Transverse colon (tissue), 4 donors: ENCODE measurements at regions of chr4 and their contacts with region 1.

Region 1: DNA sequence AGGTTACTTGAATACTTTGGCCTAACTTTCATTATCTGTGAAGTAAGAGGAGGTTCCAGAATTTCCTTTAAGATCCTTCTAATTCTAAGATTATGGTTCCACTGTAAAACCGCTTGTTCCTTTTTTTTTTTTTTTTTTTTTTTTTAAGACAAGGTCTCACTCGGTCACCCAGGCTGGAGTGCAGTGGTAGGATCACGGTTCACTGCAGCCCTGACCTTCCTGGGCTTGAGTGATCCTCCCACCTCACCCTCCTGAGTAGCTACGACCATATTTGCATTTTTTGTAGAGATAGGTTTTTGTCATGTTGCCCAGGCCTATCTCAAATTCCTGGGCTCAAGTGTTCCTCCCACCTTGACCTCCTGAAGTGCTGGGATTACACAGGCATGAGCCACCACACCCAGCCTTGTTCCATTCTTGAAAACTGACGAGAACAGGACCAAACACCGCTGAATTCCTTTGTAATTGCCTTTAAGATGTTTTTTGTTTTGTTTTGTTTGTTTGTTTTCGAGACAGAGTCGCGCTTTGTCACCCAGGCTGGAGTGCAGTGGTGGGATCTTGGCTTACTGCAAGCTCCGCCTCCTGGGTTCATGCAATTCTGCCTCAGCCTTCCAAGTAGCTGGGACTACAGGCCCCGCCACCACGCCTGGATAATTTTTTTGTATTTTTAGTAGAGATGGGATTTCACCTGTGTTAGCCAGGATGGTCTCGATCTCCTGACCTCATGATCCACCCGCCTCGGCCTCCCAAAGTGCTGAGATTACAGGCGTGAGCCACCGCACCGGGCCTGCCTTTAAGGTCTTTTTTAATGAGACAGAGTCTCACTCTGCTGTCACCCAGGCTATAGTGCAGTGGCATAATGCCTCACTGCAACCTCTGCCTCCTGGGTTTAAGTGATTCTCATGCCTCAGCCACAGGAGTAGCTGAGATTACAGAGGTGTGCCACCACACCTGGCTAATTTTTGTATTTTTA is 6.8 kb downstream of the PDS5A start:
- DNase-seq: no peak
- H3K4me3 ChIP-seq: no peak overlapping the region
- H3K27ac ChIP-seq: no peak overlapping the region
- H3K4me1 ChIP-seq: peaks cover 18 to 58% (median 19%) of the 10 kb centered on the region in 4 donors
- H3K27me3 ChIP-seq: no peaks in the 10 kb centered on the region
- CTCF ChIP-seq: no peak
- EP300 ChIP-seq: no peak
- POLR2A ChIP-seq: no peak

Region 2: GRCh38 chr4:39495454-39496213 is 475.3 kb before region 1 on chr4:
- in situ Hi-C with region 1: loop called in 1 of 4 experiments (anchors 25 kb)
- intact Hi-C with region 1: no loop called
- DNase-seq: no peak
- H3K4me3 ChIP-seq: no peak overlapping the region
- H3K27ac ChIP-seq: no peak overlapping the region
- H3K4me1 ChIP-seq: no peaks in the 10 kb centered on the region
- H3K27me3 ChIP-seq: no peaks in the 10 kb centered on the region
- CTCF ChIP-seq: no peak
- EP300 ChIP-seq: no peak
- POLR2A ChIP-seq: no peak

Region 3: DNA sequence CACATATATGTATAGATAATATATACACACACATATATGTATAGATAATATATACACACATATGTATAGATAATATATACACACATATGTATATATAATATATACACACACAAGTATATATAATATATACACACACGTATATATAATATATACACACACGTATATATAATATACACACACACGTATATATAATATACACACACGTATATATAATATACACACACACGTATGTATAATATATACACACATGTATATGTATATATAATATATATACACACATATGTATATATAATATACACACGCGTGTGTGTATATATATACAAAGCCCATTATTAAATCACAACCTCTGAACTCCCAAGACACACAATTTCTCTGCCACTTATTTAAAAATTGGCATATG is 281.0 kb before region 1 on chr4:
- in situ Hi-C with region 1: loop called in 3 of 4 experiments (anchors 5 to 25 kb)
- intact Hi-C with region 1: no loop called
- DNase-seq: no peak
- H3K4me3 ChIP-seq: no peak overlapping the region
- H3K27ac ChIP-seq: no peak overlapping the region
- H3K4me1 ChIP-seq: peaks cover 0 to 15% (median 3%) of the 10 kb centered on the region in 4 donors
- H3K27me3 ChIP-seq: no peaks in the 10 kb centered on the region
- CTCF ChIP-seq: no peak
- EP300 ChIP-seq: no peak
- POLR2A ChIP-seq: no peak

Region 4: DNA sequence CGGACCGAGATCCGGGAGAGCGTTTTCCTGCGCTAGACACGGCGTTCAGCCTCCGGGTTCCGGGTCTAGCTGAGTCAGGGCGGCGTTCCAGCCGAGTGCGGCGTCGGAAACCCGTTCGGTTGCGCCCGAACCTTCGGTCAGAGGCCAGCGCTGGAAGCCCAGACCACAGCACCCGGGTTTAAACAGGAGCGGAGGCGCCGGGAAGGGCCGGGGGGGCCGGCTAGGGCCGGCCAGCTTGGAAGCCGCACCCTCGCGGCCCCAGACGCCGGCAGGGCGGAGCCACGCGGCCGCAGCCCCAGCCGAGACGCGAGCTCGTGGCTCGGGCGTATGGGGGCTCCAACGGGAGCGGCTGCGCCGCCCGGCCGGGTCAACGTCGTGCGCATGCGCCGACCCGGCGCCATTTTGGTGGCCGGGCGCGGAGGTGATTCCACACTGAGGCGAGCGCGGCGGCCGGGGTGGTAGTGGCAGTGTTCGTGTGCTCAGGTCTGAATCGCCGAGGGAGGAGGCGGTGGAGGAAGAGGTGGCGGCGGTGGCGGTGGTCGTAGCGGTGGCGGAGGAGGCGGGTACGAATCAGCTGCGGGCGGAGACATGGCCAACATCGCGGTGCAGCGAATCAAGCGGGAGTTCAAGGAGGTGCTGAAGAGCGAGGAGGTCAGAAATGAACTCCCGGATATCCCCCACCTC is 273.1 kb before region 1 on chr4 and contains the start of gene UBE2K:
- in situ Hi-C with region 1: loop called (anchors 5 to 25 kb)
- intact Hi-C with region 1: loop called (anchors 2 kb)
- DNase-seq: peak; percentile 91
- H3K4me3 ChIP-seq: peak within 1 kb of the TSS; percentile 57 to 91 (median 71)
- H3K27ac ChIP-seq: peak within 1 kb of the TSS; percentile 92 to 96 (median 94)
- H3K4me1 ChIP-seq: peaks cover 5 to 44% (median 29%) of the 10 kb centered on the region in 4 donors
- H3K27me3 ChIP-seq: no peaks in the 10 kb centered on the region
- CTCF ChIP-seq: peak in 1 of 5 experiments; percentile 16
- EP300 ChIP-seq: no peak
- POLR2A ChIP-seq: peak; percentile 82
- total RNA-seq, gene UBE2K: 18.9 to 48.6 (median 37.3) TPM